Right lobe of liver (tissue), 6 donors: ENCODE measurements at regions of chr17 and their contacts with region 1.

Region 1: GRCh38 chr17:31437720-31438420 is 46.4 kb downstream of the RAB11FIP4 start:
- DNase-seq: peak in 1 of 3 donors; percentile 52
- ATAC-seq: peak; percentile 3 to 25 (median 4)
- H3K4me3 ChIP-seq: no peak overlapping the region
- H3K27ac ChIP-seq: no peak overlapping the region
- H3K4me1 ChIP-seq: peaks cover 0 to 11% (median 4%) of the 10 kb centered on the region in 4 donors
- H3K27me3 ChIP-seq: no peaks in the 10 kb centered on the region
- CTCF ChIP-seq: no peak
- POLR2A ChIP-seq: no peak

Region 2: GRCh38 chr17:30992551-30992950 is 445.3 kb before region 1 on chr17:
- intact Hi-C with region 1: no loop called
- DNase-seq: no peak
- ATAC-seq: no peak
- H3K4me3 ChIP-seq: no peak overlapping the region
- H3K27ac ChIP-seq: no peak overlapping the region
- H3K4me1 ChIP-seq: no peaks in the 10 kb centered on the region
- H3K27me3 ChIP-seq: no peaks in the 10 kb centered on the region
- CTCF ChIP-seq: no peak
- POLR2A ChIP-seq: no peak

Region 3: GRCh38 chr17:31226373-31226772 is 211.5 kb before region 1 on chr17:
- intact Hi-C with region 1: no loop called
- DNase-seq: no peak
- ATAC-seq: no peak
- H3K4me3 ChIP-seq: no peak overlapping the region
- H3K27ac ChIP-seq: no peak overlapping the region
- H3K4me1 ChIP-seq: no peaks in the 10 kb centered on the region
- H3K27me3 ChIP-seq: no peaks in the 10 kb centered on the region
- CTCF ChIP-seq: no peak
- POLR2A ChIP-seq: no peak

Region 4: DNA sequence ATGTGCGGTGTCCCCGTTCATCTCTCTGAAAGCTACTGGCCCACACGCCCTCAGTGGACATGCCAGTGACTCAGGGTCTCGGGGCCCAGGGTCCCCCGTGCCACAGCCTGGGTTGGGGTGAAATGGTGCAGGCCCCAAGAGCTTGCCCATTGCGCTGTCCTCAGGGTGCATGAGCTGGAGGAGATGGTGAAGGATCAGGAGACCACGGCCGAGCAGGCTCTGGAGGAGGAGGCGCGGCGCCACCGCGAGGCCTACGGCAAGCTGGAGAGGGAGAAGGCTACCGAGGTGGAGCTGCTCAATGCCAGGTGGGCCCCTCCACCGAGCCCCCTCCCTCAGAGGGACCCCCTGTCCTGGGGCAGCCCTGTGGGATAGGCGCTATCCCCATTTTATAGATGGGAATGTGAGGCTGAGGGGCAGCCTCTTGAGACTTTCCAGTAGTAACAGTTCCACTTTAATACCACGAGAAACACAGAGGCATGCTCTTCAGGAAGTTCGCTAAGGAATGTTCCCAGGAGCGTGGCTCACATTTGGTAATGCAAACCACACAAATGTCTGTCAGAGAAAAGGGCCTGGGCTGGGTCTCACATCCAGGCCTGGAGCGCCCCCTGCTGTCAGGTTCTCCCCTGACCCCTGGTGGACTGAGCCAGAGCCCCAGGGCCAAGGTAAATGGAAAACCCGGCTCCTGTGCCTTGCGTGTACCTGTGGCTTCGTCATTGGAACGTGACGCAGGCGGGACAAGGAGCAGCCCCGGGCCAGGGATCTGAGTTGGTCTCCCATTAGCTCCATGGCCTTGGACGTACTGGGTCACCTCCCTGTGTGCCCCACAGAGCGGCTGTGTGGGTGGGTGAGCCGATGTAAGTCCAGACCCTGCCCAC is 87.3 kb after region 1 on chr17:
- intact Hi-C with region 1: loop called (anchors 5 kb)
- DNase-seq: peak; percentile 90 to 92 (median 92)
- ATAC-seq: peak; percentile 82 to 94 (median 87)
- H3K4me3 ChIP-seq: no peak overlapping the region
- H3K27ac ChIP-seq: peak overlapping the region in 2 of 3 donors; percentile 21 to 43
- H3K4me1 ChIP-seq: peaks cover 0 to 17% (median 6%) of the 10 kb centered on the region in 4 donors
- H3K27me3 ChIP-seq: no peaks in the 10 kb centered on the region
- CTCF ChIP-seq: peak; percentile 94 to 97 (median 96)
- POLR2A ChIP-seq: no peak